Activated CD4-positive, alpha-beta T cell treated with anti-CD3 and anti-CD28 coated beads, Interleukin-2, amount 10 ng/mL, durations not matched to agents 7 days and 5 days (primary cell): ENCODE measurements at regions of chr12 and their contacts with region 1.

Region 1: DNA sequence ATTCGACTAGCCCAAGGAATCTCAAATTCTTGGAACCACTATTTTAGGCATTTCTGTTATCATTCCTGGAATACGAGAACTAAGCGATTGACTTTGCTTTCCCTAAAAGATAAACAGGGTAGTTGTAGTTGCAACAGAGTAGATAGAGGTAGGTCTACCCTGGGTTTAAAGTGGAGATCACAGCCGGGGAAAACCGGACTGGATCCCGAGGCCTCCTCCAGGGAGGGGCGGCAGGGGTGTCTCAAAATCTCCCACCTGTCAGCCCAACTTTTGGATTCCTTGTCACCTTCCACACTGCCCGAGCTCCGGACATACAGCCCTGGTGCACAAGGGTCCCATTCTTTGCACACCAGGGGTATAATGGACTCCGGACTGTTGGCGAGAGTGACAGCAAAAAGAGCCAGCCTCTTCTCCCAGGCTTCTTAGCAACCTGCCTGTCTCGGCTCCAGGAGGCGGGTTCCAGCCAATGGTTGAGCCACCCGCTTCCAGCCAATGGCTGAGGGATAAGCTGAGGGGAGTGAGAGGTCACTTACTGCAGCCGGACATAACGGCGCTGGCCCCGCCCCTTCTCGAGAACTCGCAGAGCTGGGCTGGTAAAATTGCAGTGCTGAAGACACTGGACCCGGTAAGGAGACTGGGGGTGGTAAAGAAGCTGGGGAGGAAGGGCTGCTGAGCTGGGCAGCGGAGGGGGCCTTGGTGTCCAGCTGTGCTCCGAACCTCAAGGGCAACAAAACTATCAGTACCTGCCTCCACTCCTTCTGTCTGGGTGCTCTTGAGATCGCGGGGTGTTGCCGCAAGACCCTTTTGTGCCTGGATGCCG is at the start of gene SUOX:
- DNase-seq: peak; percentile 25
- H3K4me3 Mint-ChIP-seq: peak within 1 kb of the TSS; percentile 52
- H3K27ac Mint-ChIP-seq: peak within 1 kb of the TSS; percentile 38
- H3K4me1 Mint-ChIP-seq: peaks cover 38% of the 10 kb centered on the region
- H3K27me3 Mint-ChIP-seq: no peaks in the 10 kb centered on the region
- total RNA-seq, gene SUOX: 2.4 to 3.5 TPM

Region 2: GRCh38 chr12:55973598-55974307 is 23.2 kb before region 1 on chr12 and contains the start of gene RAB5B:
- CTCF ChIA-PET with region 1: interaction called, 15 read pairs
- POLR2A ChIA-PET with region 1: no interaction called
- DNase-seq: peak; percentile 99
- H3K4me3 Mint-ChIP-seq: no peak within 1 kb of the TSS
- H3K27ac Mint-ChIP-seq: no peak within 1 kb of the TSS
- H3K4me1 Mint-ChIP-seq: peaks cover 34% of the 10 kb centered on the region
- H3K27me3 Mint-ChIP-seq: no peaks in the 10 kb centered on the region
- total RNA-seq, gene RAB5B: 56.9 to 58.1 TPM

Region 3: GRCh38 chr12:55982319-55982936 is 14.5 kb before region 1 on chr12:
- CTCF ChIA-PET with region 1: interaction called, 53 read pairs
- POLR2A ChIA-PET with region 1: interaction called, 3 read pairs
- DNase-seq: no peak
- H3K4me3 Mint-ChIP-seq: no peak overlapping the region
- H3K27ac Mint-ChIP-seq: no peak overlapping the region
- H3K4me1 Mint-ChIP-seq: peaks cover 12% of the 10 kb centered on the region
- H3K27me3 Mint-ChIP-seq: no peaks in the 10 kb centered on the region

Region 4: DNA sequence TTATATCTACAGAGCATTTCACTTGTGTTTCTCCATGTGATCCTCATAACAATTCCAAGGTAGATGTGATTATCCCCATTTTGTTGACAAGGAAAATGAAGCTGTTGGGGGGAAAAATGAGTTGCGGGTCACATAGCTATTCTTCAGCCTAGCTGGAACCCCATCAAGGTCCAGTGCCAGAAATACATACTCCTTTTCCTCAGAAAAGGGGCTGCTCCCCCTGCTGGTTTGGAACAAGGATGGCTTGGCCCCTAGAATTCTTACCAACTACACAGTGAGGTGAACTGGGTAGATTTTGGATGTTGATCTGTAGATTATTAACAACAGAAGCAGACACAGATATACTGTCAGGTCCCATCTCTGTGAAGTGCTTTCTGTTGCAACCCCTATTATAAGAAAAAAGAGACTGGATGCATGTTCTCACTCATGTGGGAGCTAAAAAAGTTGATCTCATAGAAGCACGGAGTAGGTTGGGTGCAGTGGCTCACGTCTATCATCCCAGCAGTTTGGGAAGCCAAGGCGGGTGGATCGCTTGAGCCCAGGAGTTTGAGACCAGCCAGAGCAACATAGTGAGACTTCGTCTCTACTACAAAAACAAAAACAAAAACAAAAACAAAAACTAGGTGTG is 32.9 kb after region 1 on chr12:
- CTCF ChIA-PET with region 1: interaction called, 10 read pairs
- POLR2A ChIA-PET with region 1: no interaction called
- DNase-seq: peak; percentile 67
- H3K4me3 Mint-ChIP-seq: no peak overlapping the region
- H3K27ac Mint-ChIP-seq: no peak overlapping the region
- H3K4me1 Mint-ChIP-seq: peaks cover 52% of the 10 kb centered on the region
- H3K27me3 Mint-ChIP-seq: no peaks in the 10 kb centered on the region

Region 5: DNA sequence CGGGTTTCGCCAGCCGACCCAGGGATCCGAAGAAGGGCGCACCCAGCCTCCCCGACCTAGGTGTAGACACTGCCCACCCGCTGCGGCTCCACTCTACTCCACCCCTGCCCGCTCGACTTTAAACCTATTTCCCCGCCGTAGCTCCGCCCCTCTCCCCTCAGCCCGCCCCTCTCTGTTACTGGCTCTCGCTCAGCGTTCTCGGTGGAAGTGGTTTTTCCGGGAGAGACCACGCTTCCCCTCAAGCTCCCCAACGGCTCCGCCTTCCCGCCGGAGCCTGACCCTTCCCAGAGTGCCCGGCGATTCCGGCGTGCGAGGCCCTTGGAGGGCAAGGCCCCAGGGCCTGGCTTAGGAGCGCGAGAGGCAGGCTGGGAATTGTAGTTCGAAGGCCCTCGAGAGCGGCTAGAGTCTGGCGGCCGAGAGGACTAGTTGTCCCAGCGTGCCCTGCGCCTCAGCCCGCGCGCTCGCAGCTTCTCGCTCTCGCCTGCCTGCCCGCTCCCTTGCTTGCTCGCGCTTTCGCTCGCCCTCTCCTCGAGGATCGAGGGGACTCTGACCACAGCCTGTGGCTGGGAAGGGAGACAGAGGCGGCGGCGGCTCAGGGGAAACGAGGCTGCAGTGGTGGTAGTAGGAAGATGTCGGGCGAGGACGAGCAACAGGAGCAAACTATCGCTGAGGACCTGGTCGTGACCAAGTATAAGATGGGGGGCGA is 107.3 kb after region 1 on chr12 and contains the start of gene PA2G4:
- CTCF ChIA-PET with region 1: interaction called, 10 read pairs
- POLR2A ChIA-PET with region 1: no interaction called
- DNase-seq: peak; percentile 99
- H3K4me3 Mint-ChIP-seq: peak within 1 kb of the TSS; percentile 99
- H3K27ac Mint-ChIP-seq: peak within 1 kb of the TSS; percentile 98
- H3K4me1 Mint-ChIP-seq: peaks cover 62% of the 10 kb centered on the region
- H3K27me3 Mint-ChIP-seq: no peaks in the 10 kb centered on the region
- total RNA-seq, gene PA2G4: 244 to 289 TPM

Region 6: GRCh38 chr12:56178347-56178746 is 181.4 kb after region 1 on chr12:
- CTCF ChIA-PET with region 1: no interaction called
- POLR2A ChIA-PET with region 1: no interaction called
- DNase-seq: no peak
- H3K4me3 Mint-ChIP-seq: no peak overlapping the region
- H3K27ac Mint-ChIP-seq: peak overlapping the region; percentile 19
- H3K4me1 Mint-ChIP-seq: no peaks in the 10 kb centered on the region
- H3K27me3 Mint-ChIP-seq: no peaks in the 10 kb centered on the region